CD8-positive, alpha-beta T cell (primary cell): ENCODE measurements at regions of chr20 and their contacts with region 1.

Region 1: GRCh38 chr20:309841-310644 is 12.7 kb downstream of the ZCCHC3 start:
- DNase-seq: peak in 8 of 9 experiments; percentile 64 to 88 (median 80)
- ATAC-seq: peak; percentile 100
- H3K4me3 ChIP-seq: peak overlapping the region; percentile 38 to 59
- H3K4me3 Mint-ChIP-seq: peak overlapping the region; percentile 81
- H3K27ac ChIP-seq: no peak overlapping the region
- H3K27ac Mint-ChIP-seq: no peak overlapping the region
- H3K4me1 ChIP-seq: peaks cover 13% of the 10 kb centered on the region
- H3K4me1 Mint-ChIP-seq: peaks cover 18% of the 10 kb centered on the region
- H3K27me3 ChIP-seq: no peaks in the 10 kb centered on the region
- H3K27me3 Mint-ChIP-seq: no peaks in the 10 kb centered on the region
- CTCF ChIP-seq: no peak

Region 2: GRCh38 chr20:258963-259362 is 51.1 kb before region 1 on chr20:
- CTCF ChIA-PET with region 1: no interaction called
- POLR2A ChIA-PET with region 1: no interaction called
- intact Hi-C with region 1: no loop called
- DNase-seq: peak in 3 of 9 experiments; percentile 21 to 43 (median 32)
- ATAC-seq: no peak
- H3K4me3 ChIP-seq: no peak overlapping the region
- H3K4me3 Mint-ChIP-seq: no peak overlapping the region
- H3K27ac ChIP-seq: no peak overlapping the region
- H3K27ac Mint-ChIP-seq: no peak overlapping the region
- H3K4me1 ChIP-seq: no peaks in the 10 kb centered on the region
- H3K4me1 Mint-ChIP-seq: peaks cover 7% of the 10 kb centered on the region
- H3K27me3 ChIP-seq: no peaks in the 10 kb centered on the region
- H3K27me3 Mint-ChIP-seq: peaks cover 4% of the 10 kb centered on the region
- CTCF ChIP-seq: no peak

Region 3: DNA sequence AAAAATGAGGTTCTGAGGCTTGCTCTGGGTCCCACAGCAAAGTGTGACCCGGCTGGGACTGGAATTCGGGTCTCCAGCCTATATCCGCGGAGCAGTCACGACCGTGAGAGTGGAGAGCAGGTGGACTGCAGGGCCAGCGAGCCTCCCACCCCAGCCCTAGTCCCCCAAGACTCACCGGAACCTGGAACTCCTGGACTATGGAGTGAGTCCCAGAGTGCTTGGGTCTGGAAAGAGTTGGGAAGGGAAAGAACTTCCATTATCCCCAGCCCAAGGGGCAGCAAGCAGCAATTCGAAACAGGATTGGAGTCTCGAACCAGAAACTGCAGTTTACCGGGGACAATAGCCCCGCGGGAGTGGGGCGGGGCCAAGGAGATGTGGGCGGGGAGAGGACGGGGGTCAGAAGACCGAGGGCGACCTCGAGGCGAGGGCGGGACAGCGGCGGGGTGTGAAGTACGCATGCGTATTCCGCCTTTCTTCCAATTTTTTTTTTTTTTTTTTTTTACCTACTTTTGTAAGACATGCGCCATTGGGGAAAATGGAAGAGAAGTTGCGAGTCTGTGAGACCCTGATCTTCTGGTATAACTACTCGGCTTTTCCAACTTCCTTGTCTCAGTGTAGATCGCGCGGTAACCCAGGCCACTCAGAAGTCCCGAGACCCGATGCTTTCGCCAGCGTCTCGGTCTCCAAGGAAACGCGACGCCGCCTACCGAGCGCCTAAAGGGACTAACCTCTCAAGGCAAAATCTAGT is 19.8 kb before region 1 on chr20 and contains the start of gene C20orf96:
- CTCF ChIA-PET with region 1: no interaction called
- POLR2A ChIA-PET with region 1: interaction called, 3 read pairs
- intact Hi-C with region 1: loop called in 1 of 2 experiments (anchors 1 kb)
- DNase-seq: peak; percentile 62 to 92 (median 84)
- ATAC-seq: peak; percentile 88
- H3K4me3 ChIP-seq: peak within 1 kb of the TSS; percentile 54 to 73
- H3K4me3 Mint-ChIP-seq: no peak within 1 kb of the TSS
- H3K27ac ChIP-seq: peak within 1 kb of the TSS; percentile 17 to 28
- H3K27ac Mint-ChIP-seq: no peak within 1 kb of the TSS
- H3K4me1 ChIP-seq: peaks cover 22% of the 10 kb centered on the region
- H3K4me1 Mint-ChIP-seq: peaks cover 6% of the 10 kb centered on the region
- H3K27me3 ChIP-seq: no peaks in the 10 kb centered on the region
- H3K27me3 Mint-ChIP-seq: no peaks in the 10 kb centered on the region
- CTCF ChIP-seq: peak; percentile 34
- total RNA-seq, gene C20orf96: 1.9 to 2.6 TPM

Region 4: GRCh38 chr20:297098-297924 is 12.7 kb before region 1 on chr20 and contains the start of gene ZCCHC3:
- CTCF ChIA-PET with region 1: interaction called, 8 read pairs
- POLR2A ChIA-PET with region 1: interaction called, 9 read pairs
- intact Hi-C with region 1: loop called in 1 of 2 experiments (anchors 1 kb)
- DNase-seq: peak; percentile 58 to 93 (median 83)
- ATAC-seq: peak; percentile 85
- H3K4me3 ChIP-seq: peak within 1 kb of the TSS; percentile 86 to 98
- H3K4me3 Mint-ChIP-seq: peak within 1 kb of the TSS; percentile 99
- H3K27ac ChIP-seq: peak within 1 kb of the TSS; percentile 88 to 90
- H3K27ac Mint-ChIP-seq: peak within 1 kb of the TSS; percentile 98
- H3K4me1 ChIP-seq: peaks cover 28% of the 10 kb centered on the region
- H3K4me1 Mint-ChIP-seq: peaks cover 44% of the 10 kb centered on the region
- H3K27me3 ChIP-seq: no peaks in the 10 kb centered on the region
- H3K27me3 Mint-ChIP-seq: no peaks in the 10 kb centered on the region
- CTCF ChIP-seq: no peak
- total RNA-seq, gene ZCCHC3: 21.8 to 22.0 TPM

Region 5: GRCh38 chr20:910870-911770 is 601.1 kb after region 1 on chr20:
- CTCF ChIA-PET with region 1: no interaction called
- POLR2A ChIA-PET with region 1: no interaction called
- intact Hi-C with region 1: no loop called
- DNase-seq: no peak
- ATAC-seq: no peak
- H3K4me3 ChIP-seq: no peak overlapping the region
- H3K4me3 Mint-ChIP-seq: no peak overlapping the region
- H3K27ac ChIP-seq: no peak overlapping the region
- H3K27ac Mint-ChIP-seq: no peak overlapping the region
- H3K4me1 ChIP-seq: no peaks in the 10 kb centered on the region
- H3K4me1 Mint-ChIP-seq: no peaks in the 10 kb centered on the region
- H3K27me3 ChIP-seq: no peaks in the 10 kb centered on the region
- H3K27me3 Mint-ChIP-seq: peaks cover 13% of the 10 kb centered on the region
- CTCF ChIP-seq: no peak